Posterior cingulate gyrus (tissue), 11 donors: ENCODE measurements at regions of chr4 and their contacts with region 1.

Region 1: DNA sequence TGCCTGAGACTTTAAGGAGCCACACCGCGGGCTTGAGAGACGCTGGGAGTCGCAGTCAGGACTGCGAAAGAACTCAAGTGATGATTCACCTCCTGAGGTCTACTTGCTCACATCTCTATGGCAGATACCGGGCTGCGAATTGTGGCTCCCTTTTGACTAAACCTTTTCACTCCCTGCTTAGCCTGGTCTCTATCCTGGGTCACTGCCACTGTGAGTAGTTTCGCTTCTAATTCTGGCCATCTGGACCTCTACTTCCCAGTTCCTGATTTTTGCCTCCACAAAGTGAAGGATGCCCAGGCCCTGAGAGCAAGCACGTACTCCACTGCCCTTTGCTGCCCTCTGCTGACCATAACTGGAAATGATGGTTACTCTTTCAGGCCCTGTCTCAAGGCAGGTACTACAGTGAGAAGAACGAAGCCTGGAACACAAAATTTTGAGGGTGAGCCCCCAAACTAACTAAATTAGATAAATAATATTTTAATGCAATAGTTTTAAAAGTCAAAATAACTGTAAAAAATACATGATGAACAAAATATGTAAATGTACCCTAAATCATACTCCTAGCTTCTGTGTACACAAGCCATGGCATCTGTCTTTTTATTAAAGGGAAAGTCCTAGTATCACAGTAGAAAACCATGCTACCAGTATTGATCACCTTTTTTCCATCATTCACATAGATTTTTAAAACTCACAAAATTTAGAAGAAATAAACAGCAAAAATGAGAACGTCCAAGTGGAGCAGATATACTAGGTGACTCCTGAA is 16.7 kb downstream of the MAD2L1 start:
- DNase-seq: peak in 9 of 10 donors; percentile 51 to 94 (median 77)

Region 2: GRCh38 chr4:119559044-119559647 is 490.8 kb before region 1 on chr4:
- intact Hi-C with region 1: loop called (anchors 1 kb)
- DNase-seq: no peak

Region 3: GRCh38 chr4:119628308-119629141 is 421.4 kb before region 1 on chr4 and contains the start of gene PDE5A:
- intact Hi-C with region 1: loop called (anchors 1 kb)
- DNase-seq: peak; percentile 51 to 95 (median 76)